Left colon (tissue), 2 donors: ENCODE measurements at regions of chr1 and their contacts with region 1.

Region 1: DNA sequence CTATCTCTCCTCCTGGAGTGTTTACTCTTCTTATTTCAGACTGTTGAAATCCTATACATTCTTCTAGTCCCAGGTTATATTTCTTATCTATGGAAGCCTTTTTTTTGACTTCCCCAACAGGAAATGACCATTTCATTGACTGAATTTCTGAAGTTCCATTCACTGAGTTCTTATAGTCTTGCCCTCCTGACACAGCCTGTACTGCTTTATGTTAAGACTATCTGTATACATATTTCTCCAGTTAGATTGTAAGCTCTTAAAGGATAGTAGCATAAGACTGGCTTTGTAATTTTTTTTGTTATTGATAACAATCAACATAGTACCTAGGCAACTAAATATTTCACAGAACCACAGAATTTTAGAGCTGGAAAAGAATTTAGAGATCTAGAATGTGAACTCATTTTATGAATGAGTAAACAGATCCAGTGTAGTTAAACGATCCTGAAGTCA is 14.9 kb upstream of the MACF1 start:
- DNase-seq: no peak
- ATAC-seq: no peak

Region 2: GRCh38 chr1:39105061-39105840 is 84.4 kb before region 1 on chr1:
- intact Hi-C with region 1: loop called in 1 of 2 experiments (anchors 5 kb)
- DNase-seq: peak; percentile 76 to 86
- ATAC-seq: peak; percentile 87